ENCODE measurements at regions of chr9 and their contacts with region 1.

Region 1: GRCh38 chr9:127423934-127424675 is at the start of gene ZNF79:
- DNase-seq: peak; percentile 80 to 96 (median 84)
- ATAC-seq: peak; percentile 94
- H3K4me3 ChIP-seq: peak within 1 kb of the TSS; percentile 96
- H3K4me3 Mint-ChIP-seq: peak within 1 kb of the TSS; percentile 93 to 99 (median 98)
- H3K27ac ChIP-seq: peak within 1 kb of the TSS; percentile 83
- H3K27ac Mint-ChIP-seq: peak within 1 kb of the TSS; percentile 91 to 96 (median 94)
- H3K4me1 ChIP-seq: peaks cover 12 to 27% of the 10 kb centered on the region in 2 donors
- H3K4me1 Mint-ChIP-seq: peaks cover 39 to 54% (median 50%) of the 10 kb centered on the region in 7 donors
- H3K27me3 ChIP-seq: no peaks in the 10 kb centered on the region
- H3K27me3 Mint-ChIP-seq: no peaks in the 10 kb centered on the region
- total RNA-seq, gene ZNF79: 4.8 to 17.8 (median 13.6) TPM

Region 2: DNA sequence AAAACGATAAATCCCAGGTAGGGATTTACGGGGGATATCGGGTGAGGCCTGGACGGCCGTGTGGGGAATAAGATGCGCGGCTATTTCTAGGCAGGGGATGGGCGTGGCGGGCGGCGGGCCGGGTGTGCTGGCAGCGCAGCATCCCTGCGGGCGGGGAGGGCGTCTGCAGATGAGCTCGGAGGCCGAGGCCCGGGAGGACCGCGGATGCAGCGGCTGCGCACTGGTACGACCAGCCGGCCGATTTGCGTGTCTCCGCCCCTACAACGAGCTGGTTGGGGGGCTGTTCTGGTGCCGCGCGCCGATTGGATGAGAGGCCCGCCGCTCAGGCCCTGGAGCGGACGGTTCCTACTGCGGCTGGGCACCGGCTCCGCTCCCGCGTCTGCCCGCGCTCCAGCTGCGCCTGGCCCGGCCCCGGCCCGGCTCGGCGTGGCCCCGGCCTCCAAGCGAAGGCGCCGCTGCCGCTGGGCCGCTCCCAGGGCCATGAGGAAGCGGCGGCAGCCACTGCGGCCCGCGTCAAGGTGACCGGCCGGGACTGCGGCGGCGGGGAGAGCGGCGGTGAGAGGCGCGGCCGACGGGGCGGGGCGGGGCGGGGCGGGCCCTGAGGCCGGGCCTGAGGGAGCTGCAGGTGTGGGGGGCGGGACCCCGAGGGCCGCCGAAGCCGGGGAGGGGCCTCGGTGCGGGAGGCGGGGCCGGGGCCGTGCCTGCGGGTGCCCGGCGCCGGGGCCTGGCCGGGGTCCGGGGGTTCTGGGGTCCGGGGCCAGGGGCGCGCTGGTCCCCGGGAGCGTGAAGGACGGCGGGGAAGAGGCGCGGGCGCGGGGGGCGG is 509.4 kb before region 1 on chr9 and contains the start of gene RALGPS1:
- CTCF ChIA-PET with region 1: no interaction called
- POLR2A ChIA-PET with region 1: no interaction called
- intact Hi-C with region 1: loop called in 1 of 2 experiments (anchors 1 kb)
- DNase-seq: peak; percentile 68 to 88 (median 81)
- ATAC-seq: peak; percentile 98
- H3K4me3 ChIP-seq: peak within 1 kb of the TSS; percentile 47
- H3K4me3 Mint-ChIP-seq: peak within 1 kb of the TSS; percentile 73 to 90 (median 82)
- H3K27ac ChIP-seq: peak within 1 kb of the TSS; percentile 13
- H3K27ac Mint-ChIP-seq: peak within 1 kb of the TSS in 6 of 9 donors; percentile 14 to 89 (median 75)
- H3K4me1 ChIP-seq: no peaks in the 10 kb centered on the region
- H3K4me1 Mint-ChIP-seq: peaks cover 5 to 13% (median 7%) of the 10 kb centered on the region in 7 donors
- H3K27me3 ChIP-seq: no peaks in the 10 kb centered on the region
- H3K27me3 Mint-ChIP-seq: peaks cover 0 to 36% (median 0%) of the 10 kb centered on the region in 5 donors
- total RNA-seq, gene RALGPS1: 2.6 to 8.3 (median 5.8) TPM

Region 3: GRCh38 chr9:127224178-127224882 is 199.8 kb before region 1 on chr9:
- CTCF ChIA-PET with region 1: no interaction called
- POLR2A ChIA-PET with region 1: interaction called, 4 read pairs
- intact Hi-C with region 1: loop called (anchors 1 kb)
- DNase-seq: peak; percentile 81 to 90 (median 85)
- ATAC-seq: peak; percentile 82
- H3K4me3 ChIP-seq: peak overlapping the region; percentile 51
- H3K4me3 Mint-ChIP-seq: peak overlapping the region; percentile 74 to 93 (median 85)
- H3K27ac ChIP-seq: no peak overlapping the region
- H3K27ac Mint-ChIP-seq: peak overlapping the region; percentile 8 to 94 (median 82)
- H3K4me1 ChIP-seq: peaks cover 10 to 31% of the 10 kb centered on the region in 2 donors
- H3K4me1 Mint-ChIP-seq: peaks cover 24 to 49% (median 41%) of the 10 kb centered on the region in 7 donors
- H3K27me3 ChIP-seq: no peaks in the 10 kb centered on the region
- H3K27me3 Mint-ChIP-seq: peaks cover 0 to 58% (median 12%) of the 10 kb centered on the region in 5 donors

Region 4: GRCh38 chr9:127311239-127311741 is 112.8 kb before region 1 on chr9:
- CTCF ChIA-PET with region 1: no interaction called
- POLR2A ChIA-PET with region 1: no interaction called
- intact Hi-C with region 1: loop called in 1 of 2 experiments (anchors 1 kb)
- DNase-seq: peak in 5 of 9 donors; percentile 11 to 42 (median 26)
- ATAC-seq: no peak
- H3K4me3 ChIP-seq: no peak overlapping the region
- H3K4me3 Mint-ChIP-seq: no peak overlapping the region
- H3K27ac ChIP-seq: no peak overlapping the region
- H3K27ac Mint-ChIP-seq: no peak overlapping the region
- H3K4me1 ChIP-seq: no peaks in the 10 kb centered on the region
- H3K4me1 Mint-ChIP-seq: no peaks in the 10 kb centered on the region
- H3K27me3 ChIP-seq: peaks cover 0 to 4% of the 10 kb centered on the region in 2 donors
- H3K27me3 Mint-ChIP-seq: peaks cover 15 to 32% (median 31%) of the 10 kb centered on the region in 5 donors

Region 5: GRCh38 chr9:127396808-127397497 is 27.2 kb before region 1 on chr9 and contains the start of gene SLC2A8:
- CTCF ChIA-PET with region 1: no interaction called
- POLR2A ChIA-PET with region 1: interaction called, 3 read pairs
- intact Hi-C with region 1: loop called in 1 of 2 experiments (anchors 1 kb)
- DNase-seq: peak; percentile 33 to 87 (median 61)
- ATAC-seq: peak; percentile 97
- H3K4me3 ChIP-seq: peak within 1 kb of the TSS; percentile 22
- H3K4me3 Mint-ChIP-seq: peak within 1 kb of the TSS; percentile 50 to 82 (median 64)
- H3K27ac ChIP-seq: no peak within 1 kb of the TSS
- H3K27ac Mint-ChIP-seq: peak within 1 kb of the TSS in 2 of 9 donors; percentile 37 to 59
- H3K4me1 ChIP-seq: peaks cover 10 to 15% of the 10 kb centered on the region in 2 donors
- H3K4me1 Mint-ChIP-seq: peaks cover 11 to 25% (median 16%) of the 10 kb centered on the region in 7 donors
- H3K27me3 ChIP-seq: peaks cover 0 to 57% of the 10 kb centered on the region in 2 donors
- H3K27me3 Mint-ChIP-seq: peaks cover 51 to 80% (median 72%) of the 10 kb centered on the region in 5 donors
- total RNA-seq, gene SLC2A8: 0.27 to 4.8 (median 1.3) TPM